ENCODE measurements at regions of chr10 and their contacts with region 1.

Region 1: GRCh38 chr10:45235798-45236231 is 79.6 kb downstream of the OR13A1 start:
- DNase-seq: no peak
- H3K4me3 ChIP-seq: no peak overlapping the region
- H3K4me3 Mint-ChIP-seq: no peak overlapping the region
- H3K27ac ChIP-seq: no peak overlapping the region
- H3K27ac Mint-ChIP-seq: no peak overlapping the region
- H3K4me1 ChIP-seq: no peaks in the 10 kb centered on the region
- H3K4me1 Mint-ChIP-seq: no peaks in the 10 kb centered on the region
- H3K27me3 ChIP-seq: no peaks in the 10 kb centered on the region
- H3K27me3 Mint-ChIP-seq: peaks cover 10 to 16% of the 10 kb centered on the region in 2 donors

Region 2: GRCh38 chr10:45180946-45181875 is 54.6 kb before region 1 on chr10:
- CTCF ChIA-PET with region 1: no interaction called
- POLR2A ChIA-PET with region 1: no interaction called
- DNase-seq: no peak
- H3K4me3 ChIP-seq: no peak overlapping the region
- H3K4me3 Mint-ChIP-seq: no peak overlapping the region
- H3K27ac ChIP-seq: no peak overlapping the region
- H3K27ac Mint-ChIP-seq: no peak overlapping the region
- H3K4me1 ChIP-seq: no peaks in the 10 kb centered on the region
- H3K4me1 Mint-ChIP-seq: no peaks in the 10 kb centered on the region
- H3K27me3 ChIP-seq: no peaks in the 10 kb centered on the region
- H3K27me3 Mint-ChIP-seq: peaks cover 0 to 21% of the 10 kb centered on the region in 2 donors

Region 3: DNA sequence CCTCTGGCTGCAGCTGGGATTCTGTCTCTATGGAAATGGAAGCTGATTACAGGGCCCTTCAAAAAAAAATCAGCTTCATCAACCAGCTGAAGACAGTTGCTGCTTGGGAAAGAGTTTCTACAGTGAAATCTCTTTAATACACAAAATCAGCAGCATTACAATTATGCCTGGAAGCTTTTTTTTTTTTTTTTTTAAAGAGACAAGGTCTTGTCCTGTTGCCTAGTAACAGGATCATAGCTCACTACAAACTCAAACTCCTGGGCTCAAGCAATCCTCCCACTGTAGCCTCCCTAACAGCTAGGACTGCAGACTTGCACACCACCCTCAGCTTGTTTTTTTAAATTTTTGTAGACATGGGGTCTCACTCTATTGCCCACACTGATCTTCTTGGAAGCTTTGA is 14.9 kb before region 1 on chr10:
- CTCF ChIA-PET with region 1: interaction called, 16 read pairs
- POLR2A ChIA-PET with region 1: no interaction called
- DNase-seq: no peak
- H3K4me3 ChIP-seq: no peak overlapping the region
- H3K4me3 Mint-ChIP-seq: no peak overlapping the region
- H3K27ac ChIP-seq: no peak overlapping the region
- H3K27ac Mint-ChIP-seq: no peak overlapping the region
- H3K4me1 ChIP-seq: no peaks in the 10 kb centered on the region
- H3K4me1 Mint-ChIP-seq: no peaks in the 10 kb centered on the region
- H3K27me3 ChIP-seq: no peaks in the 10 kb centered on the region
- H3K27me3 Mint-ChIP-seq: peaks cover 3% of the 10 kb centered on the region in 2 donors

Region 4: GRCh38 chr10:45246522-45246921 is 10.7 kb after region 1 on chr10:
- CTCF ChIA-PET with region 1: interaction called, 10 read pairs
- POLR2A ChIA-PET with region 1: no interaction called
- DNase-seq: no peak
- H3K4me3 ChIP-seq: no peak overlapping the region
- H3K4me3 Mint-ChIP-seq: no peak overlapping the region
- H3K27ac ChIP-seq: no peak overlapping the region
- H3K27ac Mint-ChIP-seq: no peak overlapping the region
- H3K4me1 ChIP-seq: no peaks in the 10 kb centered on the region
- H3K4me1 Mint-ChIP-seq: peaks cover 5 to 8% (median 6%) of the 10 kb centered on the region in 3 donors
- H3K27me3 ChIP-seq: no peaks in the 10 kb centered on the region
- H3K27me3 Mint-ChIP-seq: peaks cover 6 to 17% of the 10 kb centered on the region in 2 donors

Measured in CD8-positive, alpha-beta memory T cell (primary cell).